ENCODE measurements at regions of chr6 and their contacts with region 1.

Region 1: DNA sequence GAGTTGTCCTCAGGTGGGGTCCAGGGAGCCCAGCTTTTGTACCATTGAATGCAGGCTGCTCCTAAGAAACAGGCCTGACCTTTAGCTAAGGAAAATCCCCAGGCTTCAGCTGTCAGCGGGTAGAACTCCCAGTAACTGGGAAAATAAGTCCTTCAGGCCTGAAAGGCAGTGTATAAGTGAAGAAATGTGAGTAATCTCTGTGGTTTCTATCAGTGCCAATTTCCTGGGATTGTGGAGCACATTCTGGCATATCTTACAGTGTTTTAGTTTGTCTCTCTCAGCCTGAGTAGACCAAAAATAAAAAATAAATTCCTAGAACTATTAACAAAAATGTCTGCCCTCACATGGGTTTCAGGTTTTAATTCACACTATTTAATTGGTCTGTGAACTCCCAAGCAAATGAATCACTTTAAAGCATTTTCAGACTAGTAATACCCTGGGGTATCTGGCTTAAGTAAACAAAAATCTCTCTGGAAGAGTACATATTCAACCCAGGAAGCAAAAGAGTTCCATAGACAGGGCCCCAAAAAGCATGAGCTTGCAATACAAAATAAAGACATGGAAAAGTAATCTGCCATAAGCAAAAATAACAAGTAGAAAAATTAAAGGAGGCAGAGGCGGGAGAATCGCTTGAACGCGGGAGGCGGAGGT is 566.2 kb upstream of the NOX3 start:
- DNase-seq: no peak
- H3K4me3 Mint-ChIP-seq: no peak overlapping the region
- H3K27ac Mint-ChIP-seq: no peak overlapping the region
- H3K4me1 Mint-ChIP-seq: no peaks in the 10 kb centered on the region
- H3K27me3 Mint-ChIP-seq: no peaks in the 10 kb centered on the region
- CTCF ChIP-seq: no peak

Region 2: DNA sequence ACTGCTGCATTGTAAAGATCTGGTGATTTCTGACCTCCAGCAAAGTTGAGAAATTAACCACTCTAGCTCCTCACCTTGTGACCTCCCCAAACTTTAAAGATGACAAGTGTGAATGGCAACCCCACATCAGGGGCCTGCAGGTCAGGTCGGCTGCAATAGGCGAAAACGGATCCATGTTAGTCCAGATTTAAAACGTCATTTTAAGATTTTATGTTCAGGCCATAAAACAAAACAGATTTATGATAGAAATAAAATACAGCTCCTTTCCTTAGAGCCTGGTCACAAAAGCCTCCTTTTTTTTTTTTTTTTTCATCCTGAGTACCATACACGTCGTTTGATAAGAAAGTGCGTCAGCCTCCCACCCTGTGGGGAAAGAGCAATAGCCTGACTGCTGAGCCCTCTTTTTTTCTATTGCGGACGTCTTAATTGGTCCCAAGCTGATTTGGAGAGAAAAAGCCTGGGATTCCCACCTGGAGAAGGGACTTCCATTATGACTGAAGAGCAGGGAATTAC is 47.0 kb before region 1 on chr6:
- CTCF ChIA-PET with region 1: no interaction called
- intact Hi-C with region 1: no loop called
- DNase-seq: no peak
- H3K4me3 Mint-ChIP-seq: no peak overlapping the region
- H3K27ac Mint-ChIP-seq: no peak overlapping the region
- H3K4me1 Mint-ChIP-seq: no peaks in the 10 kb centered on the region
- H3K27me3 Mint-ChIP-seq: no peaks in the 10 kb centered on the region
- CTCF ChIP-seq: no peak

Region 3: DNA sequence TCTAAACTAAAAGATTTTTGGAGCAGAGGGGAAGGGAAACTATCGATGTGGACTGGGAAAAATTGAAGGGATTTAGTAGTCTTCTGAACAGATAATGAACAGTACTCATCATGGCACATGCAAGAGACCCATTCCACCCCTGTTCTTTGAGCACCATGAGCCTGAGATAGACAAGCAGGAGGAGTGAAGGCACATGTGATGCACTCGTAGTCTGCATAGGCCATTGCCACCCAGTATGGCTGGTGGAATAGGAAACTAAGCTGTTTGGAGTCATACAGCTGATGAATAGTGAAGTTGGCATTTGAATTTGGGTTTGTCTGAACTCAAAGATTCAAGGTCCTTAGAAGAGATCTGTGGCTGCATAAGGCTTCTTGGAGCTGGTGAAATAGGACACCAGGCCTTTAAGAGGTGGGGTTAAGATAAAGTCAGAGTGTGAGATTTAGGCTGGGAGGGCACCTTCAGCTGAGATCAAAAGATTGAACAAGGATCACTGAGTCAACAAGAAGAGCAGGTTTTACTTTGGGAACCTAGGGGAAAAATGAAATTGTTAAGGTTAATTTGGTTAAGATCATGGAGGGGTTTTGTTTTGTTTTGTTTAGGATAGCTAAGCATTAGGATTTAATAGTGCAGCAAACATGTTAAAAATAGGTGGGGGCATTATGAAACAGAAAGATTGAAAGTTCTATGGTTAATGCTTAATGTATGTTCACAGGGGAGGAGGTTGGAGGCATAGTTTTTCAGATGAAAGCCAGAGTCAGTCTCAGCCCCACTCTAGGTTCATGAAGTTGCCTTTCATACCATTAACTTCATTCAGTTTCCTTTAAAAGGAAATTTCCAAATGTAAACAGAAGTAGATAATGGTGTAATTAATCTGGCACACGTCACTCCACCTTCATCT is 904.1 kb after region 1 on chr6:
- CTCF ChIA-PET with region 1: interaction called, 11 read pairs
- intact Hi-C with region 1: no loop called
- DNase-seq: no peak
- H3K4me3 Mint-ChIP-seq: peak overlapping the region; percentile 19
- H3K27ac Mint-ChIP-seq: no peak overlapping the region
- H3K4me1 Mint-ChIP-seq: peaks cover 13% of the 10 kb centered on the region
- H3K27me3 Mint-ChIP-seq: no peaks in the 10 kb centered on the region
- CTCF ChIP-seq: no peak

Measured in Calu3 (cell line).